A673 (cell line): ENCODE measurements at regions of chr17 and their contacts with region 1.

Region 1: DNA sequence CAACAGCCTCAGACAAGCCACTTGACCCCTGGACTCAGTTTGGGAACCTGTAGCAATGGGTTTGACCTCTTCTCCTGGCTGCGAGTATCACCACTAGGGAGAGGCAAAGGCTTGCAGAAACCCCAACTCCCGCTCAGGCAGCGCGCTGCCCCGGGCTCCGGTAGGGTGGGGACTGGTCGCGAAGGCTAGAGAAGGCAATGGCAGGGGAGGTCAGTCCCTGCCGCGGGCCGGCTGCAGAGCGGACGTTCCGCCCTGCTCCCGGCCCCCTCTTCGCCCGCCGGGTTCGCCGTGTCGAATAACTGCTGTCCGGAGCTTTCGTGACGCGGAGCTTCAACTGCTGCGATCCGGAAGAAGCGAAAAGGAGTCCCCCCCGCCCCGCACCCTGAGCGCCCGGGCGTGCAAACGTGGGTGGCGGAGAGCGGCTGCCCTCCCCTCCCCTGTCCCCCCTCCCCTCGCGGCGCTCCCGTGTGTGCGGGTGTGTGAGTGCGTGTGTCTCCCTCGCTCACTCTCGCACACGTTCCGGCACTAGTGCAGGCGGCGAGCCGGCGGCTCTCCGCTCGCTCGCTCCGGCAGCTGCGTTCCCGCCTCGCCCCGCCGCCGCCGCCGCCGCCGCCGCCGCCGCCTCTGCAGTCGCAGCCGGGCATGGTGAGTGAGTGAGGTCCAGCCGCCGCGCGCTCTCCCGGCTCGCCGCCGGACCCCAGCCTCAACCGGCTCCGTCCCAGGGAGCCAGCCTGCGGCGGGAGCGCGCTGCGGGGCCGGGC is 792 bp upstream of the SHISA6 start:
- DNase-seq: peak; percentile 77
- H3K4me3 ChIP-seq: peak overlapping the region; percentile 65
- H3K27ac ChIP-seq: peak overlapping the region; percentile 80
- H3K4me1 ChIP-seq: peaks cover 32% of the 10 kb centered on the region
- H3K27me3 ChIP-seq: no peaks in the 10 kb centered on the region
- CTCF ChIP-seq: peak; percentile 55

Region 2: DNA sequence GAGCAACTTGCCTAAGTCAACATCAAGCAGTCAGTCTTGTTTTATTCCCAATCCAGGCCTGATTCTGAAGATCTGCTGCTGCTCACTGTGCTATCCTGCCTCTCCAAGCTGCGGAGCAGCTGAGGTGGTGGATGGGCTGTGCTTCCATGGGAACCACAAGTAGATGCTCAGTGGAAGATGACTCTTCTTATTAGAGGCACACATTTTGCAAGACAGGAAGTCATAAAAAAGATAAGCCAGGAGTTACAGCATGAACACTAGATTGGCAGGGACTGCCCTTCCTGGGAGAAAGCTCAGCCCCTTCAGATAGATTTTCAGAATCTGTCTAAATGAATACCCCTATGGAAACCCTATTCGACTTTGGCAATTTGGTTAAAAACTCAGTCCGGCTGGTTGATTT is 143.9 kb after region 1 on chr17:
- CTCF ChIA-PET with region 1: no interaction called
- POLR2A ChIA-PET with region 1: no interaction called
- intact Hi-C with region 1: loop called (anchors 5 kb)
- DNase-seq: peak; percentile 96
- H3K4me3 ChIP-seq: no peak overlapping the region
- H3K27ac ChIP-seq: peak overlapping the region; percentile 77
- H3K4me1 ChIP-seq: peaks cover 56% of the 10 kb centered on the region
- H3K27me3 ChIP-seq: no peaks in the 10 kb centered on the region
- CTCF ChIP-seq: no peak

Region 3: DNA sequence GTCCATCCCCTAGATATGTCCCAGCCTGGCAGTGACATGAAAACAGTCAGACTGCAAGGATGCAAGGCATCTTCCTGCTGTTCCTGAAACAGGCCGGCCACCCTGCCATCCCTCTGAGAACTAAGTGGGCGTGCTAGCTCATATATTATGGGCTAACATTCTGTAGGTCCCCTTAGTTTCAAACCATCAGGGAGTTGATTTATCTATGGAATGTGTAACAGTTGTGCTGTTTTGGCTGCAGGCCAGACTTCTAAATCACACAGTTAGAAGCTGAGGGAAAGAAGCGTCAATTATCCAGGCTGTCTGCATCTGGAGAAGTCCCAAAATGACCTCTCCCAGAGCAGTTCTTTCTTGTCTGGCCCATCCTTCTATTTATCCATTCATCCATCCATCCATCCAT is 255.4 kb after region 1 on chr17:
- CTCF ChIA-PET with region 1: no interaction called
- POLR2A ChIA-PET with region 1: no interaction called
- intact Hi-C with region 1: loop called (anchors 5 kb)
- DNase-seq: peak; percentile 95
- H3K4me3 ChIP-seq: no peak overlapping the region
- H3K27ac ChIP-seq: peak overlapping the region; percentile 65
- H3K4me1 ChIP-seq: peaks cover 48% of the 10 kb centered on the region
- H3K27me3 ChIP-seq: no peaks in the 10 kb centered on the region
- CTCF ChIP-seq: no peak

Region 4: DNA sequence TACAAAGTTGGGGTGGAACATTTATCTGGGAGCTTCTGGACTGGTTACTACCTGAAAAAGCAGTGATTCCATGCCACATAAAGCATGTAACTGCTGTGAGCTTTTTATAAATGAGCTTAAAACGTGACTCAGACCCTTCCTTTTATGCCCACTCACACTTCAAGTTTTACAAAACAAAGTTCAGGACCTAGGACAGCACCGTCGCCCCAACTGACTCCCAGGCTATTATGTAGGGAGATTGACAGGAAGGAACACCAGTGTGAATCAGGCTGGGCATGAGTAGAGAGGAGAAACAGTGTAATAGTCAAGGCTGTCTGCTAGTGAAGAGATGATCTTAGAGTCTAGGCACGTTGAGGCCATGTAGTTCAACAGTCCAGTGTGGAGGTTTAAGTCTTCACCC is 266.4 kb after region 1 on chr17:
- CTCF ChIA-PET with region 1: interaction called, 12 read pairs
- POLR2A ChIA-PET with region 1: no interaction called
- intact Hi-C with region 1: no loop called
- DNase-seq: peak; percentile 91
- H3K4me3 ChIP-seq: no peak overlapping the region
- H3K27ac ChIP-seq: no peak overlapping the region
- H3K4me1 ChIP-seq: peaks cover 21% of the 10 kb centered on the region
- H3K27me3 ChIP-seq: no peaks in the 10 kb centered on the region
- CTCF ChIP-seq: no peak

Region 5: DNA sequence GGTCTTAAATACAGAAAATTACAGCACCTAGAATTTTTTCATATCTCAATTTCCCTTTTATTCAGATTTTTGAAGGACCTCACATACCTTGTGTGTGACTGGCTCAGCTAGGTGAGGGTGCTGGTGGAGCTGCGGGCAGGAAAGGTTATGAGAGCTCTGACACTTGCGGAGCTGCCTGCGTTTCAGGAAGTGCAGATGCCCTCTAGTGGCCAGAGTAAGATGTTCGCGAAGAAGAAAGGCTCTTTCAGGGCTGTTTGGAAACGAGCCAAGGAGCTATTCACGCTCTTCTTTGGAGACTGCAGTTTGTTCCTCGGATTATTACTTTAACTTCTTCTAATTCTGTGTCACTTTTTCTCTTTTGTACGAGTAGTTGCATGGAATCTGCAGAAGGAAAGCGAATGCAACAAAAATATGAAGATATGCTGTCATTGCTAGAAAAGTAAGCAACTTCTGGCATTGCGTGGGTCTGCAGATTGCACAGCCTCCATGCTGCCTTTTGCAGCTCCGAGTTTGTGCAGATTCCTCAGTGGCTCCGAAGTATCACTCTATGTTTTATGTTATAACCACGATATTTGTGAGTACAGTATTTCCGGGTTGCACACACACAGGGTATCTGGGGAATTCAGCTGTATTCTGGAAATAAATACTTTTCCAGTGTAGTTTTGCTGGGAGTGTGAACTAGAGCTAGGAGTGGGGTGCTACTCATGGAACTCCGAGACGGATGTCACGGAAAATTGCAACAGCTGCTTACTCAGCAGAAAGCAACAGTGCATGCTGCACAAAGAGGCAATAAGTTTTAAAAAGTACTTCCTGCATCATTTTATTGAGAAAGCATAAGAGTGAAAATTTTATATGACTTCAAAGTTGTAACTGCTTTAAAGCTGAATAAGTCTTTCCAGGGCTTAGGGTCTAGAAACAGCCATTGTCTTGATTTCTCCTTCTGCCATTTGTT is 404.3 kb after region 1 on chr17:
- CTCF ChIA-PET with region 1: interaction called, 5 read pairs
- POLR2A ChIA-PET with region 1: no interaction called
- intact Hi-C with region 1: loop called (anchors 5 kb)
- DNase-seq: peak; percentile 94
- H3K4me3 ChIP-seq: no peak overlapping the region
- H3K27ac ChIP-seq: no peak overlapping the region
- H3K4me1 ChIP-seq: peaks cover 35% of the 10 kb centered on the region
- H3K27me3 ChIP-seq: no peaks in the 10 kb centered on the region
- CTCF ChIP-seq: peak; percentile 94

Region 6: DNA sequence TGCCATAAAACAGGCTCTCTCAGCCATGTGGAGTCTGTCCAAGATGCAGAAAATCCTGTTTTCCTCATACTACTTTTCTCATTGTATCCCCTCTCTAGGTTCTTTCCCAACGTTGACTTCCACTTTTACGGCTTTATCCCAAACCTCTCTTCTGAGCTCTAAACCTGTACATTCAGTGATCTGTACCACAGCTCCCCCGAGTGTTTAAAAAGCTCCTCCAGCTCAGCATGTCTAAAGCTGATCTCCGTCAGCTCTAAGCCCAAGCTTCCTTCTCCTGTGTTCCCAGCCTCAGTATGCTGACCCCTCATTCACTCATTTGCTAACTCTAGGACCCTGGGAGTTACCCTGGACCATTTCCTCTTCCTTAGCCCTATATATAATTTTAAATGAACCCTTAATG is 502.7 kb after region 1 on chr17:
- CTCF ChIA-PET with region 1: no interaction called
- POLR2A ChIA-PET with region 1: no interaction called
- intact Hi-C with region 1: loop called (anchors 5 kb)
- DNase-seq: peak; percentile 81
- H3K4me3 ChIP-seq: no peak overlapping the region
- H3K27ac ChIP-seq: no peak overlapping the region
- H3K4me1 ChIP-seq: peaks cover 37% of the 10 kb centered on the region
- H3K27me3 ChIP-seq: no peaks in the 10 kb centered on the region
- CTCF ChIP-seq: peak; percentile 79

Region 7: GRCh38 chr17:11935734-11936406 is 695.6 kb after region 1 on chr17:
- CTCF ChIA-PET with region 1: no interaction called
- POLR2A ChIA-PET with region 1: no interaction called
- intact Hi-C with region 1: loop called (anchors 10 kb)
- DNase-seq: peak; percentile 88
- H3K4me3 ChIP-seq: no peak overlapping the region
- H3K27ac ChIP-seq: no peak overlapping the region
- H3K4me1 ChIP-seq: no peaks in the 10 kb centered on the region
- H3K27me3 ChIP-seq: no peaks in the 10 kb centered on the region
- CTCF ChIP-seq: peak; percentile 97